ENCODE measurements at regions of chr15 and their contacts with region 1.

Region 1: DNA sequence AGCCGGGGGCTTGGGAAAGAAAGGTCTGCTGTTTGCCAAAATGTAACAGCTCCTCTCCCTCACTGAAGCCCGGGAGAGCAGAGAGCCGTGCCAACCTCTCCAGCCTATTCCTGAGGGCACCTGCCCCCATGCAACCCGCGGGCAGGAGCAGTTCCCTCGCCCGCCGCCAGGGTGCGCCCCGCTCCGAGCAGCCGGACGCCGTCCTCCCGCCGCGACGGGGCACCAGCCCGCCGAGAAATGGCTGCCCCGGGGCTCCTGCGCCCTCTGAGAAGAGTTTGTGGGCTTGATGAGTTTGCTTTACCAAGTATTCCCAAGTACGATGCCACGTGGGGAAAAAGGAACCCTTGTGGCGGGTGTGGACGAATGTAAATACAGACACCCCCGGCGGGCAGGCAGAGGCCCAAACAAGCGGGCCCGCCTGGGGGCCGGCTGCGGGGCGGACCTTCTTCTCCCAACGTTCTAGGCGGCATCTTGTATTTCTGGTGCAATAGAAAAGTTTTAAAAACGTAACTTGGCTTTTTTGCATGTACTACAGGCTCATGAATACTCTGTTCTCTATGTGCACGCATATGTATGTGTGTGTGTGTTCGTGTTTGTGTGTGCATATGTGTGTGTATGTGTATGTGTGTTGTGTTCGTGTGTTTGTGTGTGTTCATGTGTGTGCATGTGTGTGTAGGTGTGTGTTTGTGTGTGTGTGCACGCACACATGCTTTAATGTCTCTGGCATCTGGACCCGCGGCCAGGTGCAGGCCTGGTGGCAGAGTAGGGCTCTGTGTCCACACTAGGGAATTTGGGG is 162.9 kb downstream of the CHSY1 start:
- DNase-seq: peak; percentile 77
- H3K4me3 ChIP-seq: peak overlapping the region; percentile 30
- H3K27ac ChIP-seq: no peak overlapping the region
- H3K4me1 ChIP-seq: no peaks in the 10 kb centered on the region
- H3K27me3 ChIP-seq: no peaks in the 10 kb centered on the region
- CTCF ChIP-seq: peak; percentile 91

Region 2: GRCh38 chr15:101014921-101015841 is 73.8 kb before region 1 on chr15:
- CTCF ChIA-PET with region 1: no interaction called
- POLR2A ChIA-PET with region 1: no interaction called
- intact Hi-C with region 1: loop called (anchors 5 kb)
- DNase-seq: peak; percentile 77
- H3K4me3 ChIP-seq: no peak overlapping the region
- H3K27ac ChIP-seq: no peak overlapping the region
- H3K4me1 ChIP-seq: no peaks in the 10 kb centered on the region
- H3K27me3 ChIP-seq: no peaks in the 10 kb centered on the region
- CTCF ChIP-seq: peak; percentile 94

Region 3: DNA sequence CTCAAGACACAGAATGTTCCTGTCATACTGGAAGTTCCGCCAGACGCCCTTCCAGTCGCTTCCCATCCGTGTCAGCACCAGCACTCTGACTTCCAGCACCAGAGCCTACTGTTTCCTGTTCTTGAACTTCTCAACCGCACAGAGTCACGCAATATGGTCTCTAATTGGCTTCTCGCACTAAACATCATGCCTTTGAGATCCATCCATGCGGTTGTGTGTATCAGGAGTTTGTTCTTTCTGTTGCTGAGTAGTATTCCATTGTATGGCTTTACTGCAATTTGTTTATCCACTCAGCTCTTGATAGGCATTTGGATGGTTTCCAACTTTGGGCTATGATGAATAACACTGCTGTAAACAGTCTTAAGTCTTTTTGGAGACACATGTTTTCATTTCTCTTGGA is 57.8 kb before region 1 on chr15:
- CTCF ChIA-PET with region 1: no interaction called
- POLR2A ChIA-PET with region 1: no interaction called
- intact Hi-C with region 1: loop called (anchors 5 kb)
- DNase-seq: no peak
- H3K4me3 ChIP-seq: no peak overlapping the region
- H3K27ac ChIP-seq: no peak overlapping the region
- H3K4me1 ChIP-seq: no peaks in the 10 kb centered on the region
- H3K27me3 ChIP-seq: no peaks in the 10 kb centered on the region
- CTCF ChIP-seq: no peak

Region 4: GRCh38 chr15:101258238-101259144 is 169.5 kb after region 1 on chr15:
- CTCF ChIA-PET with region 1: interaction called, 4 read pairs
- POLR2A ChIA-PET with region 1: no interaction called
- intact Hi-C with region 1: loop called (anchors 1 kb)
- DNase-seq: peak; percentile 75
- H3K4me3 ChIP-seq: no peak overlapping the region
- H3K27ac ChIP-seq: no peak overlapping the region
- H3K4me1 ChIP-seq: no peaks in the 10 kb centered on the region
- H3K27me3 ChIP-seq: no peaks in the 10 kb centered on the region
- CTCF ChIP-seq: peak; percentile 96

Measured in A673 (cell line).